Sigmoid colon (tissue), 7 donors: ENCODE measurements at regions of chr17 and their contacts with region 1.

Region 1: DNA sequence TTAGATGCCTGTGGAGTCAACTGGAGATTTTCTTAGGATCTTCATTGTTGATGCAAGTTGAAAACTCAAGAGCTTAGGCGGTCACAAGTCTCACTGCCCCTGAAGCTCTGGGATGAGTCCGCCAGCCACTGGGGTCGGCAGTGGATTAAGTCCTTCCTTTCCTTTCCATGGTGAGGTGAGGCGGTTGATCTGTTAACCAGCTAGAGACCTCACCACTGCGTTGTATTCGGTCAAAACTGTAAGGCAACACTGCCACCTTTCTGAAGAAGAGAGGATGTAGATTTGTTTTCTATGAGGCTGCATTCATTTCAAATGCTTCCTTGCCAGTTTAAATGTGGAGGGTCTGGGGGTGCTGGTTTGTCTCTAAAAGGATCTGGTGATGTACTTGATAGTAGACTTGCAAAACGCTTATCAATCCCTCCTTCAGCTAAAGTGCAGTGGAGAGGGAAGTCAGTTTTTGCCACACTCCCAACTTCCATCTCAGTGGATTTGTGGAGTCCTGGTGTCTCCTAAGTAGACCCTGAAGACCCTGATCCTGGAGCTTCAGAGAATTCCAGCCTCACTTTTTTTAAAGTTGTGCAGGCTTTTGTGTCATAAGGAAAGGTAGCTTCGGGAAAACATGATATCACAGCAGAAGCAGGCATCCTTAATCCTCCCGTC is 1.7 kb downstream of the MYOCD start:
- DNase-seq: peak; percentile 76
- H3K4me3 ChIP-seq: peak overlapping the region; percentile 68 to 87 (median 74)
- H3K27ac ChIP-seq: peak overlapping the region; percentile 88 to 97 (median 92)
- H3K4me1 ChIP-seq: peaks cover 0 to 62% (median 33%) of the 10 kb centered on the region in 4 donors
- H3K27me3 ChIP-seq: peaks cover 0 to 4% (median 0%) of the 10 kb centered on the region in 3 donors
- CTCF ChIP-seq: peak; percentile 53 to 76 (median 56)
- EP300 ChIP-seq: no peak
- POLR2A ChIP-seq: no peak

Region 2: GRCh38 chr17:12230481-12231354 is 436.7 kb before region 1 on chr17:
- intact Hi-C with region 1: loop called (anchors 1 kb)
- DNase-seq: no peak
- H3K4me3 ChIP-seq: no peak overlapping the region
- H3K27ac ChIP-seq: peak overlapping the region; percentile 64 to 75 (median 72)
- H3K4me1 ChIP-seq: peaks cover 0 to 50% (median 42%) of the 10 kb centered on the region in 4 donors
- H3K27me3 ChIP-seq: no peaks in the 10 kb centered on the region
- CTCF ChIP-seq: no peak
- EP300 ChIP-seq: peak in 2 of 4 donors; percentile 22 to 84
- POLR2A ChIP-seq: no peak

Region 3: DNA sequence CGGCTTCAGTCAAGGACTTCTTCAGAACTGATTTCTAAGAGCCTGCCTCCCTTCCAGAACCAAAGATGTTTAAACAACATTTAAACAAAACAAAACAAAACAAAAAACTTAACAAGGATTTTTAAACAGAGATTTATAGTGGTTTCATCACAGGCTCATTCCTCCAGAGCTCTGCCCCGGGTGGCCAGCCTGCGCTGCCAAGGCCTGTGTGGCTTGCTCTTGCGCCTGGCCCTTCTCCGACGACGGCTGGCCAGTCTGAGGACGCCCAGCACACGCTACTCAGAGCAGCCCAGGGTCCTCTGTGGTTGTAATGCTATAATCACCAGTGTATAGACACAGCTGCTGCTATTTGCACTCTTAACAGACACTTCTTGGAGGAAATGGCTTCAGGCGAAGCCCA is 309.0 kb before region 1 on chr17:
- intact Hi-C with region 1: loop called (anchors 2 kb)
- DNase-seq: peak; percentile 84
- H3K4me3 ChIP-seq: no peak overlapping the region
- H3K27ac ChIP-seq: peak overlapping the region; percentile 75 to 90 (median 79)
- H3K4me1 ChIP-seq: peaks cover 0 to 64% (median 41%) of the 10 kb centered on the region in 4 donors
- H3K27me3 ChIP-seq: no peaks in the 10 kb centered on the region
- CTCF ChIP-seq: no peak
- EP300 ChIP-seq: peak in 2 of 4 donors; percentile 26 to 42
- POLR2A ChIP-seq: no peak

Region 4: DNA sequence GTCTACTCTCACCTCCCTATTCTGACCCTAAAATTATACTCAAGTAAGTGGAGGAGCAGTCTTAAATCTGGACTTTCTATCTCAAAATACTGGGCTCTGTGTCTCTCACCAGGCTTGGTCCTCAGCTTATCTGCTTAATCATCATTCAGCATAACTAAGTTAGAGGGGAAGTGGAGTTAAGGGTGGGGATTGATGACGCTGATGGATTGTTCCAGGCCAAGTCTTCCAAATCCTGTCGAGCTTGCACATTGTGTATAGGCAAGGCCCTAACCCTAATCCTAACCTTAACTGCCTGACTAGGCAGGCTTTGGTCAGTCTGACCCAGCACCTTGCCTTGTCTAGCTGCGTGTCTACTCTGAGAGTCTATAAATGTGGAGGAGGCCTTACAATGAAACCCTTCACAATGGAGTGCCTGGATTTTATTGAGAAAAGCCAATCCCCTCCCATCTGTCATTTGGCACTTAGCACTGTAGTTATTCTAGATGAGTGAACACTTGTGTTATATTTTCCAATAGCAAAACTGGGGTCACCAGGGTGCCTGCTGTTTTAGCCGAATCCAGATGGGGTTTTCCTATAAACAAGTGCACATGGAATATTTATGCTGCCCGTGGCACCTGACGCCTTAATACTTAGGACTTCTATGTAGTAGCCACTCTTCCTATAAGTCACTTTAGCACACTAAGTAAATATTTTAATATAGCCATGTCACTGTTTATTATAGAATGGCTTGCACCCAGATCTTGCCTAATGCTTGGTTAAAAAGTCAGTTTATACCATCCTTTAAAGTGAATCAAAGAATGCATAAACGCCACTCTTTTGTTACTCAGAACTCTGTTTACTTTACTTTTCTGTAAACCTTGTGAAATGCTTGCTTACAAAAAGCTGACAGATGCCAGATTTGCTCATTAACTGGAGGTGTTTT is 194.9 kb before region 1 on chr17:
- intact Hi-C with region 1: loop called (anchors 2 kb)
- DNase-seq: peak; percentile 81
- H3K4me3 ChIP-seq: no peak overlapping the region
- H3K27ac ChIP-seq: peak overlapping the region; percentile 60 to 77 (median 66)
- H3K4me1 ChIP-seq: peaks cover 0 to 32% (median 27%) of the 10 kb centered on the region in 4 donors
- H3K27me3 ChIP-seq: no peaks in the 10 kb centered on the region
- CTCF ChIP-seq: no peak
- EP300 ChIP-seq: peak in 2 of 4 donors; percentile 18 to 29
- POLR2A ChIP-seq: no peak

Region 5: DNA sequence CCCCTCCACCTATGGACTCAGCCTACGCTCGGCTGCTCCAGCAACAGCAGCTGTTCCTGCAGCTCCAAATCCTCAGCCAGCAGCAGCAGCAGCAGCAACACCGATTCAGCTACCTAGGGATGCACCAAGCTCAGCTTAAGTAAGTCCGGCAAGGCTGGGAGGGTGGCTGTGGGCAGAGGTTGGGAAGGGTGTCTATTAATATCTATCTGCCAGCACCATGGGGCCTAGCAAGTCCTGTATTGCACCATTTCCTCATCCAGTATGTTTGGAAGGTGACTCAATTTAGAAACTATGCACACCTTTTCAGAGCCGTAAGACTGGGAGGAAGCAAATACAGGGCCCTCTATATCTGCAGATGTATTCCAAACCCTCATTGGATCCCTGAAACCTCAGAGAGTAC is 76.9 kb after region 1 on chr17:
- intact Hi-C with region 1: loop called (anchors 2 kb)
- DNase-seq: no peak
- H3K4me3 ChIP-seq: no peak overlapping the region
- H3K27ac ChIP-seq: peak overlapping the region in 2 of 4 donors; percentile 19 to 32
- H3K4me1 ChIP-seq: peaks cover 0 to 15% (median 10%) of the 10 kb centered on the region in 4 donors
- H3K27me3 ChIP-seq: no peaks in the 10 kb centered on the region
- CTCF ChIP-seq: no peak
- EP300 ChIP-seq: no peak
- POLR2A ChIP-seq: no peak